PC-3 (cell line): ENCODE measurements at regions of chr6 and their contacts with region 1.

Region 1: GRCh38 chr6:70706491-70707123 is 38.9 kb downstream of the SMAP1 start:
- DNase-seq: peak; percentile 71
- ATAC-seq: no peak; the same call in 1 of the 2 replicates
- H3K4me3 ChIP-seq: no peak overlapping the region
- H3K27ac ChIP-seq: no peak overlapping the region
- H3K4me1 ChIP-seq: no peaks in the 10 kb centered on the region; the same call in 1 of the 2 replicates
- H3K27me3 ChIP-seq: no peaks in the 10 kb centered on the region
- CTCF ChIP-seq: peak; percentile 73

Region 2: DNA sequence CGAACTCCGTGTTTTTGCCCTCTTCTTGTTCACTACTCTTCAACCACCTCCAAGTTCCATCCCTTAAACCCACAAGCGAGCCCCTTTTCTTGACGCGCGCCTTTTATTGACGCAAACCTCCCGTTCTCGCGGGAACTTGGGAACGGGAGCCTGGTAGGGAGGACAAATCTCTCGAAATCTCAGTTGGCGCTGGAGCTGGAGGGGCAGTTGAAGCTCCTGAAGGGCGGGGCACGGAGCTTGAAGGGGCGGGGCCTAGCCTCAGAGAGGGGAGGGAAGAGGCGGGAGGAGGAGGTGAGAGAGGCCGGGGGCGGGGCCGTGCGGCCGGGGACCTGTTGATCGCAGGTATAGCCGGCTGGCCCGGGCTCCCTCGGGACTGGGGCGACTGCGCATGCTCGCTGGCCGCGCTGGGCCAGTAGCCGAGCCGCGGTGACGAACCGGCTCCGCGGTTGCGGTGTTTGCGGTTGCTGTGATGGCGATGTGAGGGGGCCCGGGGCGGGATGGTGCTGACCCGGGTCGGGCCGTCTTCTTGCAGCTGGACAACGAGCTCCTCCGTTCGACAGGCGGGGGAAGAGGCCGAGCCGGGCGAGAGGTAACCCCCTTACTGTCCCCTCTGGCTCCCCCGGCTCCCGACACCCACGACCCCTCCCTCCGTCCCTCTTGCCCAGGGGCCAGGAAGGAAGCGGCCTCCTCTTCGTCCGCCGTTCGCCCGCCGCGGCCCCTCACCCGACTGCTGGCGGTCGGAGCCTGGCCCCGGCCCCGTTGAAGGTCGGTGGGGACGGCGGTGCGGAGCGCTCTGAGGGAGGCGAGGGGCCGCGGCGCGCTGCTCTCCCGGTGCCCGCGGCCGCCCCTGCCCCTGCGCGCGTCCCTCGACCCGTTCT is 293.3 kb before region 1 on chr6 and contains the start of gene FAM135A:
- CTCF ChIA-PET with region 1: no interaction called
- POLR2A ChIA-PET with region 1: interaction called, 17 read pairs
- intact Hi-C with region 1: no loop called
- DNase-seq: peak; percentile 97
- ATAC-seq: peak; percentile 91
- H3K4me3 ChIP-seq: peak within 1 kb of the TSS; percentile 90
- H3K27ac ChIP-seq: no peak within 1 kb of the TSS
- H3K4me1 ChIP-seq: peaks cover 14% of the 10 kb centered on the region
- H3K27me3 ChIP-seq: no peaks in the 10 kb centered on the region
- CTCF ChIP-seq: no peak
- total RNA-seq, gene FAM135A: 15.5 and 18.1 TPM in 2 replicates

Region 3: DNA sequence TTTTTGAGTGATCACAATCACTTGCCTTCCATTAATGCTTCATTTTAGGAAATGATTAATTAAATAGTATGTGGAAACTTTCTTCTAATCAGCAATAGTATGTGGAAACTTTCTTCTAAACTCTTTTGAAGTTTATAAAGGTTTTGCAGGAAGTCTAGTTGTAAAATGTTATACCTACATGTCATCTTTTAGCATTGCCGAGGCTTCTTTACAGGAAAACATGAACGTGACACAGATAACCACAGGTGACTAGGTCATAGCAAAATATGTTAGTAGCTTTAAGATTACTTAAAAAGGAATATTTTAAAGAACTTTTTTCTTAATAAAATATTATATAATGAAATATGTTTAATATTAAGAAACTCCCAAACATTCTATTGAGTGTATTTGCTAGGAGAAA is 17.9 kb after region 1 on chr6:
- CTCF ChIA-PET with region 1: no interaction called
- POLR2A ChIA-PET with region 1: no interaction called
- intact Hi-C with region 1: no loop called
- DNase-seq: no peak
- ATAC-seq: no peak
- H3K4me3 ChIP-seq: no peak overlapping the region
- H3K27ac ChIP-seq: no peak overlapping the region
- H3K4me1 ChIP-seq: no peaks in the 10 kb centered on the region
- H3K27me3 ChIP-seq: no peaks in the 10 kb centered on the region
- CTCF ChIP-seq: no peak

Region 4: DNA sequence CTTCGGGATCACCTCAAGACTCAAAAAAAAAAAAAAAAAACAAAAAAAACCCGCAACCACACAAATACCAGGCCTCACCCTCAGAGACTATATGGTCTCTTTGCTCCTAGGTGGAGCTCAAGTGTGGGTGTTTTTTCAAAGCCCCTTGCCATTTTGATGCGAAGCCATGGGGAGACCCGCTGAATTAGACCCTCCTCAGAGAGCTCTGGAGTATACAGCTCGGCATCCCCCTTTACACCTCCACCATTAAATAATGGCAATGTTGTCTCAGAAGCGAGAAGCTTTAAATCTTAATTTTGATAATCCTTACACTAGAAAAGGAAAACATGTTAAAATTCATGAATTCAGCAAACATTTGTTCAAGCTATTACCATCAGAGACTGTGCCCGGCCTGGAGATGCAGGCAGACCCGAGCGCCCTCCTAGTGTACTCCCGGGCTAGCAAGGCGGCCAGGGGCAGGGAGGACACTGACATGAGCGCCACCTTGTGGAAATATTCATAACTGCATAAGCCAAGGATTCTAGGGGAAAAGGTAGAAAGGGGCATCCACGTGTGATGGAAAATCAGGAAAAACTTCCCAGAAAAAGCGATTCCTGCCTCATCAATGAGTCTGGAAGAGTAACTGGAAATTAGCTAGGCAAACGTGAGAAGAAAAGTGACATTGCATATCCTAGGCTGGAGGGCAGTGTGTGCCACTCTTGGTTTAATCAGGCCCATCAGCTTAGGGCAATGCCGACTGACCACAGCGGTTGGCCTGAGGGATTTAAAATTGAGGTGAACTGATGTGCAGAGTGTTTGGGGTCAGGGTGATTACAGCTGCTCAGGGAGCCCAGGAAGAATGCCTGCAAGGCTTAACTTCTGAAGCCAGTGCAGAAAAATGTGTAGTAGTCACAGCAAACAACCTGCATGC is 177.7 kb after region 1 on chr6:
- CTCF ChIA-PET with region 1: no interaction called
- POLR2A ChIA-PET with region 1: no interaction called
- intact Hi-C with region 1: loop called (anchors 1 kb)
- DNase-seq: peak; percentile 63
- ATAC-seq: peak; percentile 74
- H3K4me3 ChIP-seq: no peak overlapping the region
- H3K27ac ChIP-seq: no peak overlapping the region
- H3K4me1 ChIP-seq: no peaks in the 10 kb centered on the region
- H3K27me3 ChIP-seq: no peaks in the 10 kb centered on the region
- CTCF ChIP-seq: peak; percentile 86

Region 5: GRCh38 chr6:70955441-70956190 is 249.0 kb after region 1 on chr6:
- CTCF ChIA-PET with region 1: interaction called, 3 read pairs
- POLR2A ChIA-PET with region 1: no interaction called
- intact Hi-C with region 1: loop called (anchors 2 kb)
- DNase-seq: peak; percentile 73
- ATAC-seq: peak; percentile 91
- H3K4me3 ChIP-seq: peak overlapping the region; percentile 62
- H3K27ac ChIP-seq: no peak overlapping the region
- H3K4me1 ChIP-seq: peaks cover 3% of the 10 kb centered on the region; the same call in 1 of the 2 replicates
- H3K27me3 ChIP-seq: peaks cover 60% of the 10 kb centered on the region
- CTCF ChIP-seq: peak; percentile 73